Activated T-helper 1 cell treated with anti-CD3 and anti-CD28 coated beads, Interleukin-12 subunit alpha, Interleukin-12 subunit beta, Interleukin-2, Interleukin-4 antibody, amounts not matched to agents 30 ng/mL and 10 ng/mL and 1 ng/mL, durations not matched to agents 14 hours and 24 hours and 36 hours (primary cell): ENCODE measurements at regions of chr14 and their contacts with region 1.

Region 1: GRCh38 chr14:34982417-34983147 is at the start of gene SRP54:
- DNase-seq: peak; percentile 100
- H3K4me3 Mint-ChIP-seq: no peak within 1 kb of the TSS
- H3K27ac Mint-ChIP-seq: no peak within 1 kb of the TSS
- H3K4me1 Mint-ChIP-seq: peaks cover 6% of the 10 kb centered on the region
- H3K27me3 Mint-ChIP-seq: no peaks in the 10 kb centered on the region
- total RNA-seq, gene SRP54: 76.1 and 76.2 TPM in 2 replicates

Region 2: GRCh38 chr14:34539407-34540180 is 443.0 kb before region 1 on chr14 and contains the start of gene EAPP:
- intact Hi-C with region 1: loop called (anchors 5 kb)
- DNase-seq: peak; percentile 93
- H3K4me3 Mint-ChIP-seq: peak within 1 kb of the TSS; percentile 98
- H3K27ac Mint-ChIP-seq: peak within 1 kb of the TSS; percentile 93
- H3K4me1 Mint-ChIP-seq: peaks cover 18% of the 10 kb centered on the region
- H3K27me3 Mint-ChIP-seq: no peaks in the 10 kb centered on the region
- total RNA-seq, gene EAPP: 34.4 and 35.1 TPM in 2 replicates

Region 3: GRCh38 chr14:34592623-34593022 is 390.0 kb before region 1 on chr14:
- intact Hi-C with region 1: no loop called
- DNase-seq: no peak
- H3K4me3 Mint-ChIP-seq: no peak overlapping the region
- H3K27ac Mint-ChIP-seq: no peak overlapping the region
- H3K4me1 Mint-ChIP-seq: no peaks in the 10 kb centered on the region
- H3K27me3 Mint-ChIP-seq: no peaks in the 10 kb centered on the region

Region 4: GRCh38 chr14:34714320-34715126 is 268.1 kb before region 1 on chr14 and contains the start of gene CFL2:
- intact Hi-C with region 1: loop called (anchors 1 kb)
- DNase-seq: peak; percentile 51
- H3K4me3 Mint-ChIP-seq: peak within 1 kb of the TSS; percentile 95
- H3K27ac Mint-ChIP-seq: peak within 1 kb of the TSS; percentile 95
- H3K4me1 Mint-ChIP-seq: peaks cover 33% of the 10 kb centered on the region
- H3K27me3 Mint-ChIP-seq: peaks cover 9% of the 10 kb centered on the region
- total RNA-seq, gene CFL2: 8.3 and 9.2 TPM in 2 replicates

Region 5: DNA sequence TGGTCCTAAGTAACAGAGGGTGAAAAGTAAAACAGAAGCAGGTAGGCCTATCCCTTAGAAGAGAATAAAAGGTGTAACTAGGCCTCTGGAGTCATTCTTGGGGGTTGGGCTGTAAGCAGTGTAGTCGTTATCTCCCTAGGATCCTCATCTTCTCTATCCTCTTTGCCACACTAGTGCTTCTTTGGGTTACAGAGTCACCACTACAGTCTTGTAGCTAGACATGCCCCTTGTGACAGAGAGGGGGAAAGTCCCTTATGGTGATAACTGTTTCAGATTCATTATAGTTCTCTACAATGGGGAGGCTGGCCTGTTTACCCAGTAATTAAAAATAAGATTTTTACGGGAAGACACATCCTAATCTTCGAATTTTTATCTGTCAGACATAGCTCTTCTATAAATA is 16.2 kb before region 1 on chr14:
- intact Hi-C with region 1: loop called (anchors 1 kb)
- DNase-seq: no peak
- H3K4me3 Mint-ChIP-seq: no peak overlapping the region
- H3K27ac Mint-ChIP-seq: peak overlapping the region; percentile 62
- H3K4me1 Mint-ChIP-seq: peaks cover 14% of the 10 kb centered on the region
- H3K27me3 Mint-ChIP-seq: no peaks in the 10 kb centered on the region

Region 6: DNA sequence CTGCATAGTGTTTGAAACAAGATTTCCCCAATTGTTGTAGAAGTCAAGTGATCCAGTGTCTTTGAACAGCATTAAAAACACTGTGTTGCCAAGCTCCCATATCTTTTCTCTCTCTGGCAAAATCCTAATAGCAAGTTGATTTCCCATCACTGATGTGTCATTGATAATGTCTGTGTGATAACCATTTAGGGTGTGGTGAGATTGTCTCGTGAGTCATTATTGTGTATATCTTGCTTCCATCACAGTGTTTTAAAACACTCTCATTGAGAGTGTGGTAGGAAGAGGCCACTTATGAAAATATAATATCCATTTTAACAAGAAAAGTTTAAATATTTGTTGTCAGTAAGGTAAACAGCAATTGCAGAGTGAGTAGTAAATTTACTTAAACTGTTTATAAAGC is 214.4 kb after region 1 on chr14:
- intact Hi-C with region 1: no loop called
- DNase-seq: no peak
- H3K4me3 Mint-ChIP-seq: no peak overlapping the region
- H3K27ac Mint-ChIP-seq: peak overlapping the region; percentile 12
- H3K4me1 Mint-ChIP-seq: peaks cover 30% of the 10 kb centered on the region
- H3K27me3 Mint-ChIP-seq: no peaks in the 10 kb centered on the region

Region 7: GRCh38 chr14:35808076-35808652 is 825.6 kb after region 1 on chr14:
- intact Hi-C with region 1: loop called (anchors 2 kb)
- DNase-seq: no peak
- H3K4me3 Mint-ChIP-seq: peak overlapping the region; percentile 100
- H3K27ac Mint-ChIP-seq: peak overlapping the region; percentile 97
- H3K4me1 Mint-ChIP-seq: peaks cover 29% of the 10 kb centered on the region
- H3K27me3 Mint-ChIP-seq: peaks cover 3% of the 10 kb centered on the region

Region 8: DNA sequence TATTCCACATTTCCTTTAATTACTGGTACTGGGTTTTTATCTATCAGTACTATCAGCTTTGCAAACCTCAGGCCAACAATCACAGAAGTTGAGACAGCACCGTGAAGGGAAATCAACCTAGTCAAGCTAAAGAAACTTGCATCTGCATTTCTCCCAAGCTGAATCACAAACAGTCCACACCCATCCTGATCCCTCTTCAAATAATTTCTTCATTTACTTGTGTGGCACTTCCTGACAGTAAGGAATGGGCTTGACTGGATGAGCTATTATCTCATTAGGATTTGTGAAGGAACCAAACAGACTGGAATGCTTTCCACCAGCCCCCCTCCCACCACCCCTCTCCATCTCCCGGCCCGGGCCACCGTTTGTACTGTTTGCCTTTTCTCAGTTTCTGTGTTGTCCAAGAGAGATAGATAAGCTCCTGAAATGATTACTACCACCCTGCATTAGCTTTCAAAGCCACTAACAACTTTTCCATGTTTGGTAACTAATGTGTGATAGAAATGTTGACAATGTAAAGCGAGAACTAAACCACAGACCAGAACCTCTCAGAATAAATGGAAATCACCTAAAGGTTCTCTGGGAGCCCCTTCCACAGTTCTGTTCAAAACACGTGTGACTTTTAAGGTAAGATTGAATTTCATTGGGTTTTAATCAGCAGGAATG is 1953.6 kb after region 1 on chr14:
- intact Hi-C with region 1: no loop called
- DNase-seq: no peak
- H3K4me3 Mint-ChIP-seq: no peak overlapping the region
- H3K27ac Mint-ChIP-seq: no peak overlapping the region
- H3K4me1 Mint-ChIP-seq: no peaks in the 10 kb centered on the region
- H3K27me3 Mint-ChIP-seq: no peaks in the 10 kb centered on the region